IMR-90 (cell line): ENCODE measurements at regions of chr9 and their contacts with region 1.

Region 1: DNA sequence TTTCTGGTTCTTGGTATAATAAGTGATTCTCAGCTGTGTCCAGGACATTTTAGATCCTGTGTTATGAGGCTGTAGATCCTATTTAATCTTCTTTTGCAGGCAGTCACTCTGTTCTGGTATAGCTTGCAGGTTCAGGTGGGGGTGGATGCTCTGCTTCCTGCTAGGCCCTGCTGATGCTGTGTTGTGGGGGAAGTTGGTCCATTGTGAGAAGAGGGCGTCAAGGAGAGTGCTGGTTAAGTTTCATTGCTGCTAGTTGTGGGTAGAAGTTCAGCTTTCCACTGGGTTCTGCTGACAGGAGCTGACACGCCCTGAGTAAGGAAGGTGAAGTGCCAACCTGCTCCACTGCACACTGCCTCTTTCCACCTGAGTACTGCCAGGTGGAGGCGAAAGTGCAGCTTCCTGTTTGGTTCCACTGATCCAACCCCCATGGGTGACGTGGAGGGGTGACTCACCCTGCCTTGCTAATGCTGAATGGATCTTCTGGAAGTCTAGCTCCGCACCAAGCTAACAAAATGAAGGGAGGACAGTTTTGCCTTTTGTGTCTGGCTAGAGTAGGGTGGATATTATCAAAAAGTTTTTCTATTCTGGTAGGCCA is 16.3 kb downstream of the NMRK1 start:
- DNase-seq: no peak
- ATAC-seq: no peak
- H3K4me3 ChIP-seq: no peak overlapping the region
- H3K27ac ChIP-seq: no peak overlapping the region
- H3K4me1 ChIP-seq: no peaks in the 10 kb centered on the region
- H3K27me3 ChIP-seq: no peaks in the 10 kb centered on the region
- CTCF ChIP-seq: no peak
- POLR2A ChIP-seq: no peak
- RAD21 ChIP-seq: no peak

Region 2: GRCh38 chr9:74887041-74887980 is 184.3 kb before region 1 on chr9 and contains the start of gene TRPM6:
- CTCF ChIA-PET with region 1: no interaction called
- POLR2A ChIA-PET with region 1: no interaction called
- dilution Hi-C with region 1: no loop called
- in situ Hi-C with region 1: no loop called
- intact Hi-C with region 1: loop called (anchors 10 kb)
- DNase-seq: peak; percentile 56
- ATAC-seq: peak; percentile 91
- H3K4me3 ChIP-seq: peak within 1 kb of the TSS; percentile 54
- H3K27ac ChIP-seq: no peak within 1 kb of the TSS
- H3K4me1 ChIP-seq: no peaks in the 10 kb centered on the region
- H3K27me3 ChIP-seq: no peaks in the 10 kb centered on the region; the same call in none of the 2 replicates
- CTCF ChIP-seq: no peak
- POLR2A ChIP-seq: no peak
- RAD21 ChIP-seq: no peak
- total RNA-seq, gene TRPM6: under 0.01 TPM in 2 replicates

Region 3: GRCh38 chr9:75019022-75019421 is 52.6 kb before region 1 on chr9:
- CTCF ChIA-PET with region 1: no interaction called
- POLR2A ChIA-PET with region 1: no interaction called
- dilution Hi-C with region 1: no loop called
- in situ Hi-C with region 1: loop called (anchors 5 kb)
- intact Hi-C with region 1: no loop called
- DNase-seq: no peak
- ATAC-seq: no peak
- H3K4me3 ChIP-seq: no peak overlapping the region
- H3K27ac ChIP-seq: no peak overlapping the region
- H3K4me1 ChIP-seq: no peaks in the 10 kb centered on the region
- H3K27me3 ChIP-seq: no peaks in the 10 kb centered on the region
- CTCF ChIP-seq: no peak
- POLR2A ChIP-seq: no peak
- RAD21 ChIP-seq: no peak

Region 4: GRCh38 chr9:75027187-75028107 is 44.2 kb before region 1 on chr9:
- CTCF ChIA-PET with region 1: no interaction called
- POLR2A ChIA-PET with region 1: no interaction called
- dilution Hi-C with region 1: no loop called
- in situ Hi-C with region 1: no loop called
- intact Hi-C with region 1: loop called (anchors 2 kb)
- DNase-seq: peak; percentile 45
- ATAC-seq: peak; percentile 54
- H3K4me3 ChIP-seq: peak overlapping the region; percentile 58
- H3K27ac ChIP-seq: peak overlapping the region; percentile 72
- H3K4me1 ChIP-seq: no peaks in the 10 kb centered on the region; the same call in 1 of the 2 replicates
- H3K27me3 ChIP-seq: no peaks in the 10 kb centered on the region
- CTCF ChIP-seq: peak; percentile 33
- POLR2A ChIP-seq: no peak
- RAD21 ChIP-seq: no peak